Activated CD8-positive, alpha-beta T cell treated with anti-CD3 and anti-CD28 coated beads, Interleukin-2, amount 10 ng/mL, durations not matched to agents 7 days and 5 days (primary cell): ENCODE measurements at regions of chr7 and their contacts with region 1.

Region 1: GRCh38 chr7:150448789-150449147 is 1.7 kb upstream of the GIMAP8 start:
- DNase-seq: peak; percentile 93
- ATAC-seq: peak; percentile 58
- H3K4me3 Mint-ChIP-seq: peak overlapping the region; percentile 97
- H3K27ac Mint-ChIP-seq: peak overlapping the region; percentile 95
- H3K4me1 Mint-ChIP-seq: peaks cover 55% of the 10 kb centered on the region
- H3K27me3 Mint-ChIP-seq: no peaks in the 10 kb centered on the region

Region 2: DNA sequence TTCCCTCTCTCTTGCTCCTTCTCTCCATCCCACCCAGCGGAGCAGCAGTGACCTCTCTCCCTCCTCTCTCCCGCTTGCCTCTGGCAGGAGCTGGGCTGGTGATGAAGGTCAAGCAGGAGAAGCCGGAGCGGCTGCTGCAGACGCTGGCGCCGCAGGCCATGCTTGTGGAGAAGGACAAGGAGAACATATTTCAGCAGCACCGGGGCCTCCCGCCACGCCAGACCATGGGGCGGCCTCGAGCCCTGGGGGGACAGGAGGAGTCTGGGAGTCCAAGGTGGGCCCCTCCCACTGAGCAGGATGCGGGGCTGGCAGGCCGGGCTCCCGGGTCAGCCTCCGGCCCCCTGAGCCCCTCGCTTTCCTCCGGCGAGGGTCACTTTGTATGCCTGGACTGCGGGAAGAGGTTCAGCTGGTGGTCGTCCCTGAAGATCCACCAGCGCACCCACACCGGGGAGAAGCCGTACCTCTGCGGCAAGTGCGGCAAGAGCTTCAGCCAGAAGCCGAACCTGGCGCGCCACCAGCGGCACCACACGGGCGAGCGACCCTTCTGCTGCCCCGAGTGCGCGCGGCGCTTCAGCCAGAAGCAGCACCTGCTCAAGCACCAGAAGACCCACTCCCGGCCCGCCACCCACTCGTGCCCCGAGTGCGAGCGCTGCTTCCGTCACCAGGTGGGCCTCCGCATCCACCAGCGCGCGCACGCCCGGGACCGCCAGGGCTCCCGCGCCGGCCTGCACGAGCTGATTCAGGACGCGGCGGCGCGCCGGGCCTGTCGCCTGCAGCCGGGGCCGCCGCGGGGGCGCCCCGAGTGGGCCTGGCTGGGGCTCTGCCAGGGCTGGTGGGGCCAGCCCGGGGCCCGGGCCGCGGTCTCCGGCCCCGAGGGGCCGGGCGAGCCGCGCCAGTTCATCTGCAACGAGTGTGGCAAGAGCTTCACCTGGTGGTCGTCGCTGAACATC is 52.1 kb before region 1 on chr7:
- CTCF ChIA-PET with region 1: no interaction called
- POLR2A ChIA-PET with region 1: no interaction called
- DNase-seq: no peak
- ATAC-seq: no peak
- H3K4me3 Mint-ChIP-seq: no peak overlapping the region
- H3K27ac Mint-ChIP-seq: no peak overlapping the region
- H3K4me1 Mint-ChIP-seq: peaks cover 11% of the 10 kb centered on the region
- H3K27me3 Mint-ChIP-seq: no peaks in the 10 kb centered on the region

Region 3: GRCh38 chr7:150481186-150481920 is 32.6 kb after region 1 on chr7:
- CTCF ChIA-PET with region 1: interaction called, 21 read pairs
- POLR2A ChIA-PET with region 1: interaction called, 102 read pairs
- DNase-seq: peak; percentile 78
- ATAC-seq: peak; percentile 70
- H3K4me3 Mint-ChIP-seq: peak overlapping the region; percentile 75
- H3K27ac Mint-ChIP-seq: peak overlapping the region; percentile 99
- H3K4me1 Mint-ChIP-seq: peaks cover 87% of the 10 kb centered on the region
- H3K27me3 Mint-ChIP-seq: no peaks in the 10 kb centered on the region

Region 4: GRCh38 chr7:150514748-150515222 is 66.0 kb after region 1 on chr7 and contains the start of gene GIMAP7:
- CTCF ChIA-PET with region 1: interaction called, 78 read pairs
- POLR2A ChIA-PET with region 1: interaction called, 316 read pairs
- DNase-seq: peak; percentile 84
- ATAC-seq: peak; percentile 82
- H3K4me3 Mint-ChIP-seq: peak within 1 kb of the TSS; percentile 97
- H3K27ac Mint-ChIP-seq: peak within 1 kb of the TSS; percentile 98
- H3K4me1 Mint-ChIP-seq: peaks cover 48% of the 10 kb centered on the region
- H3K27me3 Mint-ChIP-seq: no peaks in the 10 kb centered on the region
- total RNA-seq, gene GIMAP7: 134 TPM

Region 5: DNA sequence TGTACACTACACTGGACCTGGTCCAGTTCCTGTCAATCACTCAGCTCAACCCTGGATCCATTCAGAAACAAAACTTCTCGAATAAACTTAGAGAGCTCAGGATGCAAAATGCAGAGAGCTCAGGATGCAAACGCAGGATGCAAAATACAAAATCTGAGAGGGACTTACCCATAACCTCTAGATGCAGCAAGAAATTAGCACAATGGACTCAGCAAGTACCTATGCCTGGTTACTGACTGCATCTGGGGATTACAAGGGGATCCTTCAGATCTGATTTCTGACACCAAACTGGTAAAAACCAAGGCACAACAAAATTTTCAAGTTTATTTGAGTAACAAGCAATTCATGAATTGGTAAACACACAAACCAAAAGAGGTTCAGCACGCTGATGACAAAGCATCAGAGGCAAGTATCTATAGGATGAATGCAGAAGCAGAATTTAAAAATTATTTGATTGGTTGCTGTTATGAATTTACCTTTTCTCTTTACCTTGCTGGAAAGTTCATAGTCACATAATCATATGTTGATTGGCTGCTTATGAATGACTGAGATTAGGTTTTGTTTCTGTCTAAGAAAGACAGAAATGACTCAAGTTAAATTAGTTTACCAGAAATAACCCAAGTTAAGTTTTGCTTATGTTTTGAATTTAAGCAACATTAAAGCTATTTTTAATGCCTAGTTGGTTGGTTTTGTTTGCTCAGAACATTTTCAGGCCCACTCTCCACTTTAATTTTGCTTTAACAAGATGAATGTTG is 172.0 kb after region 1 on chr7:
- CTCF ChIA-PET with region 1: interaction called, 16 read pairs
- POLR2A ChIA-PET with region 1: interaction called, 4 read pairs
- DNase-seq: no peak
- ATAC-seq: no peak
- H3K4me3 Mint-ChIP-seq: no peak overlapping the region
- H3K27ac Mint-ChIP-seq: peak overlapping the region; percentile 37
- H3K4me1 Mint-ChIP-seq: peaks cover 56% of the 10 kb centered on the region
- H3K27me3 Mint-ChIP-seq: no peaks in the 10 kb centered on the region

Region 6: DNA sequence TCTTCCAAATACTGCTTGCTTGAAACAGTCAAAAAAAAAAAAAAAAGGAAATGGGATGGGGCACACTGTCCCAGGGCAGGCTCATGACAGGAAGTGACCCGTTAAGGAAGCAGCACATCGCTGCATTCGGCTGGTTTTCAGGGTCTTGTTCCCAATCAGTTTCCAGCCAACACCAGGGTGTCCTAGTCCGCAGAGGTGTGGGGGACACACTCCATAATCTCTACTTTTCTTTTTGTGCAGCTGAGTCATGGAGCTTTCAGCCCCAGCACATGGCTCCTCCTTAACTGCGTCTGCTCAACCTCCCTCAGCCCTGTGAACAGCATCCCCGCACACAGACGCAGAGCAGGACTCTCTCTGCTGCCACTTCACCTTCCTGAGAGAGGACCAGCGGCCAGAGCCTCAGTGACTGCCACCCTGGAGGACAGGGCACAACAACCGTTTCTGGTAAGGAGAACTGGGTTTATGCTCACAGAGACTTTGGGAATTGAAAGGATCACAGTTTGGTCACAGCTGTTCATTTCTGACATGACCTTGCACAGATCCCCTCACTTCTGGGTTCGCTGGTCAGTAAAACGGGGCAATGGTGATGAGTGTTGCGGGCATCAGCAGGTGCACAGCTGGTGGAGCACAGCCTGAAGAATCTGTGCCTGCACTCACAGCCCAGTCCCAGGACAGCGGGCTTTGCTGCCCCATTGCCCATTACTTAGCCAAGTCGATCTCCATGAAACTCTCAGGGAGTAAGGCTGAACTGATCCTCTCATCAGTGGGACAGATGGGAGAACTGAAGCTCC is 288.7 kb after region 1 on chr7 and contains the start of gene GIMAP5:
- CTCF ChIA-PET with region 1: interaction called, 23 read pairs
- POLR2A ChIA-PET with region 1: interaction called, 36 read pairs
- DNase-seq: peak; percentile 68
- ATAC-seq: peak; percentile 78
- H3K4me3 Mint-ChIP-seq: peak within 1 kb of the TSS; percentile 90
- H3K27ac Mint-ChIP-seq: peak within 1 kb of the TSS; percentile 89
- H3K4me1 Mint-ChIP-seq: peaks cover 79% of the 10 kb centered on the region
- H3K27me3 Mint-ChIP-seq: no peaks in the 10 kb centered on the region
- total RNA-seq, gene GIMAP5: 56.3 to 63.3 TPM

Region 7: DNA sequence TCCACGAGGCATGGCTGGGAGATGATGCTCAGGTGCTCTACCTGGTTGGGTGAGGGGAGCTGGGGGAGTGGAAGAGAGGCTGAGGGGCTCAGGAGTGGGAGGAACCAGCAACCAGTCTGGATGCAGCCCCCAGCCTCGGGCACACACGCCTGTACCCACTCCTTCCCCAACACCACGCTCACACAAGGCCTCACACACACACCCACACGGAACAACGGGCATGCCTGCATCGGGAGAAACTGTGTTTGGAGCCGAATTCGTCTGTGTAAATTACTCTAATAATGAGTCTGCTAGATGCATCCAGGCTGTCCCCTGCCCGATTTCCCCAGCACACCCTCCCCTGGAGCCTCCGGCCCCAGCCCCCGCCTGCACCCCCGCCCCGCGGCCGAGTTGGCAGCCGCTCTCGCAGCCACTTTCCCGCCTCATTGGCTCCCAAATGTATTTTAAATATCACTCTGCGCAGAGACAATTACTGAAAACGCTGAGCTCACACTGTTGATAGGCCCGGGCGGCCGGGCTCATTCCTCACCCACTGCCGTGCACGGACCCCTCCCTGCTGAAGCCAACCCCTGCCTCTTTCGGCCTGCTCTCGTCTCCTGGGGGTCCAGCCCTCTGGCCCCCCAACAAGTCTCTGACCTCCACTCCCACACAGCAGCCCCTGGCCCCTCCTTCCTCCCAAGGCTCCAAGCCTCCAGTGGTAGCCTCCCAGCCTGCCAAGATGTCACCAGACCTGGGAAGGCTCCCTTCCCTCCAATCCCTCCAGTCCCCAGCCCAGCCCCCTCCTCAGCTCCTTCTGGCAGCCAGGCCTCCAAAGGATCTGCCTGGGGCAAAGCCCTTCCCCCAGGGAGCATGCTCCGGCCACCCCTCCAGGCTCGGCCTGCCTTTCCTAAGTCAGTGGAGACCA is 750.4 kb after region 1 on chr7:
- CTCF ChIA-PET with region 1: no interaction called
- POLR2A ChIA-PET with region 1: no interaction called
- DNase-seq: no peak
- ATAC-seq: no peak
- H3K4me3 Mint-ChIP-seq: no peak overlapping the region
- H3K27ac Mint-ChIP-seq: no peak overlapping the region
- H3K4me1 Mint-ChIP-seq: peaks cover 7% of the 10 kb centered on the region
- H3K27me3 Mint-ChIP-seq: peaks cover 25% of the 10 kb centered on the region

Region 8: DNA sequence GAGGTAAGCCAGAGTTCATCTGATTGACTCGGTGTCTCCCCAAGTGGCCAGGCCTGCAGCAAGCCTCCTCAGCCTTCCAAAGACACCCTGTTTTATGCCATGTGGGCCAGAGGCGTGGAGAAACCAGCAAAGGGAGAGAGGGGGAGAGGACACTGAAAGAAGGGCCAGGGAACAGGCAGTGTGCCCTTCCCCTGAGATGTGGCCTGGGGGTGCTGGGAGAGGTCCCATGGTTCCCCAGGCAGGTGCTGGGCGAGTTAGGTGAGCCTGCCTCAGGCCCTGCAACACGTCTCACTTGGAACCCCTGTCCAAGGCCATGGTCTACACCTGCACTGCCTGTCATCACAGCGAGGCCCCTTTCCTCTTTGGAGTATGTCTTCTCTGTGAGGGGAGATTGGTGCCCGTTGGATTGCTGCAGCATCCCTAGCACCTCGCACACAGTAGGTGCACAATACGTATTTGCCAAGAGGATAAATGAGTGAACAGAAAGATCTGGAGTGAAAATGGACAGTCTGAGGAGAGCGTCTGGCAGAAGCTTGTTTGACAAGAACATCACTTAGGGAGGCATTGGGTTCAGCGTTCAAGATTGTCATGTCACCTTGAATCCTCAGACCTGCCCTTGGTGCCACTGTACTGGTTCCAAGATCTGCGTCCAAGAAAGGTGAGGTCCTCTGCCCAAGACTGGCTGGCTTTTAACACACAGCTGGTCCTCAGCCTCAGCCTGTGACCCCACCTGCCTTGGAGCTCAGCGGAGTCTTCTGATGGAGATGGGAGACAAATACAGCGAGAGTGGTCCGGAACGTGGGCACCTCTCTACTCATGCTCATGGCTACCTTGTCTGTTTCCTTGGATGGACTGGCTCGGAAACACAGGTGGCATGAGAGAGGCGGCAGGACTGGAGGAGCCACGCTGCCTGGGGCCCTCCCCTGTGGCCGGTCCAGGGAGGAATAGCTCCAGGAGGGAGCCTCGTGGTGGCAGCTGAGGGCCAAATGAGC is 853.0 kb after region 1 on chr7:
- CTCF ChIA-PET with region 1: no interaction called
- POLR2A ChIA-PET with region 1: no interaction called
- DNase-seq: no peak
- ATAC-seq: no peak
- H3K4me3 Mint-ChIP-seq: no peak overlapping the region
- H3K27ac Mint-ChIP-seq: no peak overlapping the region
- H3K4me1 Mint-ChIP-seq: peaks cover 18% of the 10 kb centered on the region
- H3K27me3 Mint-ChIP-seq: peaks cover 29% of the 10 kb centered on the region